ENCODE measurements at regions of chr11 and their contacts with region 1.

Region 1: DNA sequence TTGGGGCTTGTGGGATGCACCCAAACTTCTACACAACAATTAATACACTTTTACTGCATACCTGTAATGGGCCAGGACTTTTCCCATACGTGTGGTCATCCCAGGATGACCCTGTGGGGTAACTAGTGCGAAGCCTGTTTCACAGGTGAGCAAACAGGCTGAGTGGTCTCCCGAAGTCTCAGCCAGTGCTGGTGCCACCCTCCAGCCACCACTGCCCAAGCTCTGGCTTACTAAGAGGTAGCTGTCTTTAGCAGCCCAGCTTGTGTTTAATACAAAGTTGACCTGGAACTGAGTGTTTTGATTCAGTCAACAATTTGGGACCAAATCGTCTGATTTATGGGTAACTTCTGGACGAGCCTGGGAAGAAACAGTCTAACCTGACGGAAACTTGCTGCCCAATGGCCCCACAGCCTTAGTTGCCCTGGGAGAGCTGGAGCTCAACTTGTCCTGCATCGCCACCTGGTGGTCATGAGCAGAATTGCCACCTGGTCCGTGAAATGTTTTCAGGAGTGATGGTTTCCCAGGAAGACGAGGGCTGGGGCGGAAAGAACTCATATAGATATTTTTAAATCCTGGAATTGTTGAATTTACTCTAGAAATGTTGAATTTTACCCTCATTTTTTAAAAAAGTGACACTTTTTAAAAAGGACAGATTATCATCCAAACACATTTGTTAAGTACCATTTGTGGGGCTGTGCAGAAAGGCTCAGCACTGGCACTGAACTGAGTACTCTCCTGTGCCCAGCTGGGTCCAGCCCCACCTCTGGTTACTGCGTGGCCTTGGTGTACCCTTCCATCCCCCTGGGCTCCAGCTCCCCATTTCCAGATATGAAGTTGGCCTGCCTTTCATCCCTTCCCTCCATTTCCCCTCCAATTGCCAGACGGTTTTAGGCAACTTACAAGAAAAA is 95.5 kb upstream of the PARVA start:
- DNase-seq: peak; percentile 82 to 86
- ATAC-seq: peak; percentile 40 to 76 (median 66)
- H3K4me3 ChIP-seq: no peak overlapping the region
- H3K27ac ChIP-seq: no peak overlapping the region
- H3K4me1 ChIP-seq: peaks cover 0 to 26% (median 13%) of the 10 kb centered on the region in 9 donors
- H3K27me3 ChIP-seq: no peaks in the 10 kb centered on the region
- CTCF ChIP-seq: peak; percentile 93 to 99 (median 97)

Region 2: GRCh38 chr11:11798586-11799438 is 483.0 kb before region 1 on chr11:
- intact Hi-C with region 1: loop called in 7 of 10 experiments (anchors 2 to 10 kb)
- DNase-seq: peak; percentile 83 to 86
- ATAC-seq: peak; percentile 79 to 95 (median 91)
- H3K4me3 ChIP-seq: no peak overlapping the region
- H3K27ac ChIP-seq: no peak overlapping the region
- H3K4me1 ChIP-seq: peaks cover 0 to 9% (median 0%) of the 10 kb centered on the region in 9 donors
- H3K27me3 ChIP-seq: peaks cover 0 to 22% (median 0%) of the 10 kb centered on the region in 7 donors
- CTCF ChIP-seq: peak; percentile 81 to 97 (median 92)

Region 3: GRCh38 chr11:11923828-11924227 is 358.0 kb before region 1 on chr11:
- intact Hi-C with region 1: loop called in 4 of 10 experiments (anchors 5 to 10 kb)
- DNase-seq: no peak
- ATAC-seq: no peak
- H3K4me3 ChIP-seq: no peak overlapping the region
- H3K27ac ChIP-seq: peak overlapping the region in 1 of 10 donors; percentile 1
- H3K4me1 ChIP-seq: peaks cover 0 to 14% (median 0%) of the 10 kb centered on the region in 9 donors
- H3K27me3 ChIP-seq: no peaks in the 10 kb centered on the region
- CTCF ChIP-seq: no peak

Region 4: DNA sequence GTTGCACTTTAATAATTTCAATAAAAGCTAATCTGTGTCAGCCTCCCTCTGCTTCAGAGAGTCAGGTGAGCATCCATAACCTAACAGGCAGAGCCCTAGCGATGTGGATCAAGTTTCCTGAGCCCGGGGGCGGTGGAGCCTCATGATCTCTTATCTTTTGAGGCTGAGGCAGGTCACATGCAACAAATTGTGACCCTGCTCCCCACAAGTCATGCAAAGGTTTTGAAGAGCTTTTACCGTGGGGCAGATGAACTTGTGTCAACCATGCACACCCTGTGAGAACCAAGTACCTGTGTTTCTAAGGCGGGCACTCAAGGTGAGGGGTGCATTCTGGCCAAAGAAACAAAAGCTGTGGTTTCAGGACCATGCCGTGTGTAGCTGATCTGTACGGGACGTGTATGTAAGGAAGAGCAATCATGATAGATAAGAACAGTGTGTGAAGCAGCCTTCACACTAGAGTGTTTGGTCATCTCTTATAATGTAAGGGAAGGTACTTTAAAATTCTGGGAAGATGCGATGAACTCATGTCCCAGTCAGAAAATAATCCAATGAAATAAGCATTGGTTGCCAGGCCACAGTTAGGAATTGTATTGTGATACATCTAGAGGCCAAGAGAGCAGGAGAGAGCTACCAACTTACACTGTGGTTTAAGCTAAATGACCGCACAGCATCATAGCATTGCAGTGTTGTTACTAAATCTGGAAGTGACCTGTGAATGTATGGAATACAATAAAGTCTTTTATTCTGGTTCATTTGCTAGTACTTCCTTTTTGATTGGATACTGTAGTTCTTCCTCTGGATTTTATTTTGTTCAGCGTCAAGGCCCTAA is 323.2 kb before region 1 on chr11:
- intact Hi-C with region 1: loop called in 1 of 10 experiments (anchors 10 kb)
- DNase-seq: no peak
- ATAC-seq: no peak
- H3K4me3 ChIP-seq: no peak overlapping the region
- H3K27ac ChIP-seq: no peak overlapping the region
- H3K4me1 ChIP-seq: peaks cover 0 to 34% (median 16%) of the 10 kb centered on the region in 9 donors
- H3K27me3 ChIP-seq: no peaks in the 10 kb centered on the region
- CTCF ChIP-seq: no peak

Region 5: GRCh38 chr11:12087075-12088004 is 194.5 kb before region 1 on chr11:
- intact Hi-C with region 1: loop called in 4 of 10 experiments (anchors 2 to 5 kb)
- DNase-seq: no peak
- ATAC-seq: peak in 4 of 8 donors; percentile 6 to 22 (median 12)
- H3K4me3 ChIP-seq: no peak overlapping the region
- H3K27ac ChIP-seq: peak overlapping the region; percentile 58 to 90 (median 86)
- H3K4me1 ChIP-seq: peaks cover 35 to 76% (median 72%) of the 10 kb centered on the region in 9 donors
- H3K27me3 ChIP-seq: no peaks in the 10 kb centered on the region
- CTCF ChIP-seq: no peak

Measured in heart right ventricle (tissue), 16 donors.